Activated CD8-positive, alpha-beta T cell treated with anti-CD3 and anti-CD28 coated beads for 36 hours (primary cell): ENCODE measurements at regions of chr14 and their contacts with region 1.

Region 1: DNA sequence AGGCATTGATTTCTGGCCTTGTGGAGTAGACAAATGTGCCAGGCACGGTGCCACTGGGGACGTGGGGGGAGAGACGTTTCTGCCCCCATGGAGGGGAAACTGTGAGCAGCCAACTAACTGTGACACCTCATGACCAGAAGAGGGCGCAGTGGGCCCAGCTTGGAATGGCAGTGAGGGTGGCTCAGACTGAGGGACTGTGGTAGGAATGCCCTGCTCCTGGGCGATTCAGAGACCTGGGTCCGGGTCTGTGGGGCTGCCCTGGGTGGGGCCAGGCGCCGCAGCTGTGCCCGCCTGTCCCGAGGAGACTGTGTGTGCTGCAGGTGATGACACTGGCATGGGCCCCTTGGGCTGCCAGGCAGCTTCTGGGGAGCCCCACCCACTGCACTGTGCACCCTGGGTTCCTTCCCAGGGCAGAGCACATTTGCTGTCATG is 60.6 kb downstream of the SLC25A47 start:
- DNase-seq: peak; percentile 81
- ATAC-seq: peak; percentile 95
- H3K4me3 Mint-ChIP-seq: no peak overlapping the region
- H3K27ac Mint-ChIP-seq: no peak overlapping the region
- H3K4me1 Mint-ChIP-seq: peaks cover 16% of the 10 kb centered on the region
- H3K27me3 Mint-ChIP-seq: no peaks in the 10 kb centered on the region
- CTCF ChIP-seq: peak; percentile 92

Region 2: DNA sequence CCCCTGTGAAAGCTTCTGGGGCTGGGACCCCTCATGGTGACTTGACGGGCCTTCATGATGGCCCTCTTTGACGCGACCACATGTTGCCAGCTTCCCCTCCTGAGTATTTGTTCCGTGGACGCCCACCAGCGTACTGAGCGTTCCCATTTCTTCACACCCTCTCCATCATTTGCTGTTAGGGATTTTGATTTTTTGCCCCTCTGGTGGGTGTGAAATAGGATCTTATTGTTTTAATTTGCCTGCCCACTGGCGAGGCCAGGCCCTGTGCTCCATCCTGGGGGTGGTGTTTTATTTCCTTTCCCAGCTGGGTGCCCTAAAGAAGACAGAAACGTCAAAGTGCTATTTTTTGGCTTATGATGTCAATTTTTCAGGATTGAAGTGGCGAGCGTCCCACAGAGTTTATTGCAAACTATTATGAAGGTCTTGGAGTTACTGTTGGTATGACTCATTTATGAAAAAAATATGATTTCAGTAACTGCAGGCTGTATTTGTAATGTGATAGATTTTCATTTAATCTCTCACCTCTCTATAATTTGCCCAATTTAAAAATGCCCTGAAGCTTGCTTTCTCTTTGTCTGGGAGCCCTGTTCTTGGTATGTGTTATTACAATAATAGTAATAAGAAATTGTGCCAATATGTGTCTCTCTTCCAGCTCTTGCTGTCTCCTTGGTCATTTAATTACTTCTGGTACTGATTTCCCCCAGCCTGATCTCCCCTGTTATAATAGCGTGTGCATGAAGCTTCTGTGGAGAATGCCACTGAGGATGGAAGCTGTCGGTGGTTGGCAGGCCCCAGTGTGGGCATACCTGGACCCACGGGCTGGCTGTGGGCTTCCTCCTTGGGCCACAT is 39.0 kb after region 1 on chr14:
- CTCF ChIA-PET with region 1: interaction called, 10 read pairs
- POLR2A ChIA-PET with region 1: no interaction called
- intact Hi-C with region 1: no loop called
- DNase-seq: no peak
- ATAC-seq: no peak
- H3K4me3 Mint-ChIP-seq: no peak overlapping the region
- H3K27ac Mint-ChIP-seq: no peak overlapping the region
- H3K4me1 Mint-ChIP-seq: peaks cover 4% of the 10 kb centered on the region
- H3K27me3 Mint-ChIP-seq: no peaks in the 10 kb centered on the region
- CTCF ChIP-seq: no peak

Region 3: GRCh38 chr14:100446572-100446971 is 62.8 kb after region 1 on chr14:
- CTCF ChIA-PET with region 1: interaction called, 11 read pairs
- POLR2A ChIA-PET with region 1: no interaction called
- intact Hi-C with region 1: no loop called
- DNase-seq: peak; percentile 52
- ATAC-seq: peak; percentile 80
- H3K4me3 Mint-ChIP-seq: no peak overlapping the region
- H3K27ac Mint-ChIP-seq: no peak overlapping the region
- H3K4me1 Mint-ChIP-seq: peaks cover 12% of the 10 kb centered on the region
- H3K27me3 Mint-ChIP-seq: no peaks in the 10 kb centered on the region
- CTCF ChIP-seq: no peak

Region 4: DNA sequence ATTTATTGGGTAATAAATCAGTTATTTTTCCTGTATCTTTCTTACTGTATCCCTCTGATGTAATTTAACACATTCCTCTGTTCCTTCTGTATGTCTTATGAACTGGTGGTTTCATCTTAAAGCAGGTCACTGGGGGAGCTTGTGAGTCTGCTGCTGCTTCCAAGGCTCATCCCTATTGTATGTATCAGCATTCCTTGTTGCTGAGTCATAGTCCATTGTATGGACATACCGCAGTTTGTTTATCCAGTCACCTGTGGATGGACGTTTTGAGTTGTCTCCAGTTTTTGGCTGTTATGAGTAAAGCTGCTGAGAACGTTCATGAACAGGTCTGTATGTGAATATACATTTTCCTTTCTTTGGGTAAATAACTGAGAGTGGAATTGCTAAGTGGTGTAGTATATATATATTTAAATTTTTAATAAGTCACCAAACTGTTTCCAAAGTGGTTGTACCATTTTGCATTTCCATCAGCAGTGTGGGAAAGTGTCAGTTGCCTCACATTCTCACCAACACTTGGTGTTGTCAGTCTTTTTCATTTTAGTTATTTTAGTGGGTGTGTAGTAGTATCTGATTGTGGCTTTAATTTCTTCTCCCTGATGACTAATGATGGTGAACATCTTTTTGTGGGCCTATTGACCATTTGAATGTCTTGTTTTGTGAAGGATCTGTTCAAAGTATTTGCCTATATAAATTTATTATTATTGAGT is 120.8 kb after region 1 on chr14:
- CTCF ChIA-PET with region 1: no interaction called
- POLR2A ChIA-PET with region 1: no interaction called
- intact Hi-C with region 1: no loop called
- DNase-seq: no peak
- ATAC-seq: no peak
- H3K4me3 Mint-ChIP-seq: no peak overlapping the region
- H3K27ac Mint-ChIP-seq: no peak overlapping the region
- H3K4me1 Mint-ChIP-seq: peaks cover 7% of the 10 kb centered on the region
- H3K27me3 Mint-ChIP-seq: no peaks in the 10 kb centered on the region
- CTCF ChIP-seq: no peak

Region 5: GRCh38 chr14:100524933-100525243 is 141.1 kb after region 1 on chr14:
- CTCF ChIA-PET with region 1: interaction called, 10 read pairs
- POLR2A ChIA-PET with region 1: no interaction called
- intact Hi-C with region 1: no loop called
- DNase-seq: peak; percentile 56
- ATAC-seq: peak; percentile 47
- H3K4me3 Mint-ChIP-seq: no peak overlapping the region
- H3K27ac Mint-ChIP-seq: no peak overlapping the region
- H3K4me1 Mint-ChIP-seq: no peaks in the 10 kb centered on the region
- H3K27me3 Mint-ChIP-seq: no peaks in the 10 kb centered on the region
- CTCF ChIP-seq: peak; percentile 55

Region 6: GRCh38 chr14:100654814-100655740 is 271.3 kb after region 1 on chr14:
- CTCF ChIA-PET with region 1: interaction called, 83 read pairs
- POLR2A ChIA-PET with region 1: no interaction called
- intact Hi-C with region 1: no loop called
- DNase-seq: peak; percentile 46
- ATAC-seq: peak; percentile 77
- H3K4me3 Mint-ChIP-seq: no peak overlapping the region
- H3K27ac Mint-ChIP-seq: no peak overlapping the region
- H3K4me1 Mint-ChIP-seq: peaks cover 5% of the 10 kb centered on the region
- H3K27me3 Mint-ChIP-seq: peaks cover 15% of the 10 kb centered on the region
- CTCF ChIP-seq: peak; percentile 70

Region 7: DNA sequence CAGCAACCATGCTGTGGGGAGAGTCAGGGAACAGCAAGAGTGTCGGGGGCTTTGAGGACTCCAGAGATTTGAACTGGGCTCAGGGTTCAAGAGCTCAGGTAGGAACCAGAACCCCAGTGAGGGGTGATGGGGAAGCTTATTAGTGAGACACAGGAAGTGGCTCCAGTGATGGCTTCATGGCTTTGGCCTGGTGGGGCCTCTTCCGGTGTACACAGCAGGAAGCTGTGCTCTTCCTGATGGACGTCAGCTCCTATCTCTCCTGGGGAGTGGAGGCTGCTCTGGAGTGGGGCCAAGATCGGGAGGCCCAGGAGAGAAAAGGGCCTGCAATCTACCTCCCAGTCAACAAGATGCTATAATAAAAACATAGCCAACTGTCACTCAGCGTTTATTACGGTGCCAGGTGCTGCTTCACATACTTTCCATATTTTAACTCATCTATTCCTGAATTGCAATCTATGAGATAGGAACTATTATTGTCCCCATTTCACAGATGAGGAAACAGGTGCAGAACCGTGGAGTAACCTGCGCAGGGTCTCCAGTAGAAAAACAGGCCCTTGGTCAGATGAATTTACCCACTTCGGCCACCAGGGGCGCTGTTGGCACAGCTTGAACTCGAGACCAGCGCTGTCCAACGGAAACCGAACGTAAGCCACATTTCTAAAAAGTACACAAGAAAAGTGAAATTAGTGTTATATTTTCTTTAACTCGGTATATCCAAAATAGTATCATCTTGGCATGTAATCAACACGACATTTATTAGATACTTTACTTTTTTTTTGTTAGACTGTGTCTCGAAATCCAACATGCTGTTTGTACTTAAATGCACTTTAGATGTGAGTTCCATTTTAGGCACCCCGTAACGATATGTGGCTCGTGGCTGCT is 279.4 kb after region 1 on chr14:
- CTCF ChIA-PET with region 1: interaction called, 12 read pairs
- POLR2A ChIA-PET with region 1: no interaction called
- intact Hi-C with region 1: no loop called
- DNase-seq: peak; percentile 75
- ATAC-seq: peak; percentile 83
- H3K4me3 Mint-ChIP-seq: no peak overlapping the region
- H3K27ac Mint-ChIP-seq: peak overlapping the region; percentile 76
- H3K4me1 Mint-ChIP-seq: peaks cover 2% of the 10 kb centered on the region
- H3K27me3 Mint-ChIP-seq: peaks cover 6% of the 10 kb centered on the region
- CTCF ChIP-seq: peak; percentile 98